ENCODE measurements at regions of chr2 and their contacts with region 1.

Region 1: GRCh38 chr2:147843864-147844696 is 749 bp upstream of the ACVR2A start:
- DNase-seq: peak; percentile 89
- H3K4me3 Mint-ChIP-seq: peak overlapping the region; percentile 88
- H3K27ac Mint-ChIP-seq: peak overlapping the region; percentile 68
- H3K4me1 Mint-ChIP-seq: peaks cover 33% of the 10 kb centered on the region
- H3K27me3 Mint-ChIP-seq: peaks cover 12% of the 10 kb centered on the region

Region 2: DNA sequence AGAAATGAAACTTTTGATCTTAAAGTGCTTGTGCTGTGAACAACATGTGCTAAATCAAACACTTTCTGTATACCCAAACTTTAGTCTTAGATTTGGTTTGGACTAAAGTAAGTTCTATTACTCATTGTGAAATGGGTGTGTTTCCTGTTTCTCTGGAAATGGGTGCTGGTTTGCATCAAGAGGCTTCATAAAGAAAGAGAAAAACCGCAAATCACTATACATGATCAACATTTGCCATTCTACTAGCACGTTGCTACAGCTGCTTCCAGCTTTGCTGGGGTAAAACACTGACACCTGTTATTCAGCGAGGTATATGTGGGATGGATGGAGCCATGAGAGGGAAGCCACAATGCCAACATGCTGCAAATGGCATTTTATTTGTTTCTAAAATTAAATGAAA is 546.3 kb before region 1 on chr2:
- CTCF ChIA-PET with region 1: no interaction called
- intact Hi-C with region 1: loop called (anchors 2 kb)
- DNase-seq: peak; percentile 45
- H3K4me3 Mint-ChIP-seq: no peak overlapping the region
- H3K27ac Mint-ChIP-seq: peak overlapping the region; percentile 86
- H3K4me1 Mint-ChIP-seq: peaks cover 58% of the 10 kb centered on the region
- H3K27me3 Mint-ChIP-seq: no peaks in the 10 kb centered on the region

Region 3: DNA sequence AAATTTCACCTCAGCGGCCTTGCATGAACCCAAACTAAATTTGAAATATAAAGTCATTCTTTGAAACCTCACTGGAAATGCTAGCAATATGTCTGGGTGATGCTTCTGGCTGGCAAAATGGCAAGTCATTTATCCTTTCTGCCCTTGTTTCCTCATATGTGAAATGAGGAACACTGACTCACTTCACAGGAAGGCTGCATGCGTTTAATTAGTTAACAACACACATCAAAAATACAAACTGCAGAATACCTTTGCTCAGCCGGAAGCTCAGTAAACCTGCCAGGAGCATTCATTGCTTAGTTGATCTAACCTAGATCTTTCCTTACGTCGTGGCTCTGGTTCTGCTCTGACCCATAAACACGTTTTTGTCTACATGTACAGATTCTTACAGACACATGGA is 213.5 kb before region 1 on chr2:
- CTCF ChIA-PET with region 1: no interaction called
- intact Hi-C with region 1: loop called (anchors 1 kb)
- DNase-seq: peak; percentile 50
- H3K4me3 Mint-ChIP-seq: no peak overlapping the region
- H3K27ac Mint-ChIP-seq: peak overlapping the region; percentile 80
- H3K4me1 Mint-ChIP-seq: peaks cover 22% of the 10 kb centered on the region
- H3K27me3 Mint-ChIP-seq: no peaks in the 10 kb centered on the region

Region 4: GRCh38 chr2:147829106-147829505 is 15.0 kb before region 1 on chr2:
- CTCF ChIA-PET with region 1: no interaction called
- intact Hi-C with region 1: no loop called
- DNase-seq: no peak
- H3K4me3 Mint-ChIP-seq: no peak overlapping the region
- H3K27ac Mint-ChIP-seq: no peak overlapping the region
- H3K4me1 Mint-ChIP-seq: no peaks in the 10 kb centered on the region
- H3K27me3 Mint-ChIP-seq: no peaks in the 10 kb centered on the region

Region 5: DNA sequence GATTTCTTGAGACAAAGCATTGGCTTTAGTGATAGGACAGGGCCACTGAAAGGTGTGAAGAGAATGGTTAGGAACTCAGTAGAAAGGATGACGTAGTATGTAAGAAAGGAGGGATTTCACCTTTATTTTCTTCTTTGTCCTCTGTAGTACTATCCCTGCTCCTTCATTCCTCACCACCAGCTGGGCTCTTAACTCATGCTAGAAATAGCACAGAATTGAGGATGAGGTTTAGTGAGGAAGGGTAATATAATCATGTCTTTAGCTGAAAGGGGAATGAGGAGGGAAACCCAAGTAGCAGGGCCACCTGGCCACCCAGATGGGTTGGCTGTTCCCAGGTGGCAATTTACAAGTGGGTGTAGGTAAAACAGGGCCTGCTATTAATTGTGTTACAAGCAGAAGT is 15.9 kb after region 1 on chr2:
- CTCF ChIA-PET with region 1: no interaction called
- intact Hi-C with region 1: loop called (anchors 2 kb)
- DNase-seq: no peak
- H3K4me3 Mint-ChIP-seq: no peak overlapping the region
- H3K27ac Mint-ChIP-seq: no peak overlapping the region
- H3K4me1 Mint-ChIP-seq: peaks cover 35% of the 10 kb centered on the region
- H3K27me3 Mint-ChIP-seq: no peaks in the 10 kb centered on the region

Region 6: DNA sequence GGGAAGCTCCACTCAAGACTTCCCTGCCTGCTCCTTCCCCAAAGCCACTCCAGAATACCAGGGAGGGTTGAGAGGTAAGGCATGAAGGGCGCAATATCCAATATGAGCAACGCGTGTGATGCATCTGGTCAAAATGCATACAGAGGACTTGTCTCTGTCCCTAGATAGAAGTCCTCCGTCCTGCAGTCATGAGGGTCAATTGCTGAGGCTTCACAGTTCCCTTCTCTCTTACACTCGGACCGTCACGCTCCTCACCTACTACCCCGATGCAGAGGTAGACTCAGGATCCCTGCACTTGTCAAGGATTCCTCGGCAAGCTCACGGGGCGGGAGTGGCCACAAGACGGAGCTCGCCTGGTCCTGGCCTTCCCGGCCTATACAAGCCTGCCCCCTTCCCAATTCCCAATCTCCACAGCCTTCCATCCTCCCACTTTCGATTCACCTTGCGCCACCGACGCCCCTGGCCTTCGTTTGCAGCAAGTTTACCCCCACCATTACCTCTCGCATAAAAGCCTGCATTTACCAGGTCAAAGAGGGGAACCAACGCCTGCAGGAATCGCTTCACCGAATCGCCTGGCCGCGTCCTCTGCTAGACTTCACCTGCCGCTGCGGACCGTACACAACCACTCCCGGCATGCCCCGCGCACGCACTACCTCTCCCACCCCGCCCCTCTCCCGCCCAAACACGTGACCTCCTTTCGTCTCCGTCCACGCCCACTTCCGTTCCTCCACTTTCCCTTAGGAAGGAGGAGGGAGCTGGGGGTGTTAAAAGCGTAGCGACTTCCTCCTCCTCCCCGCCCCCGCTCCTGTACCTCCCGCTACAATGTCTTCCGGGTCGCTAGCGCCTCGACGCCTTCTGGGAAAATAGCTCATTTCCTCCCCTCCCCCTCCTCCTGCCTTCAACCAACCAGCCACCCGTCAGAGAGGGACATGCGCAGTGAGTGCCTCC is 176.3 kb after region 1 on chr2 and contains the start of gene ORC4:
- CTCF ChIA-PET with region 1: no interaction called
- intact Hi-C with region 1: loop called (anchors 1 kb)
- DNase-seq: peak; percentile 99
- H3K4me3 Mint-ChIP-seq: peak within 1 kb of the TSS; percentile 100
- H3K27ac Mint-ChIP-seq: peak within 1 kb of the TSS; percentile 96
- H3K4me1 Mint-ChIP-seq: peaks cover 44% of the 10 kb centered on the region
- H3K27me3 Mint-ChIP-seq: no peaks in the 10 kb centered on the region
- total RNA-seq, gene ORC4: 35.9 to 38.8 TPM

Region 7: GRCh38 chr2:148874868-148875341 is 1030.8 kb after region 1 on chr2 and contains the start of gene KIF5C:
- CTCF ChIA-PET with region 1: no interaction called
- intact Hi-C with region 1: loop called (anchors 2 kb)
- DNase-seq: peak; percentile 94
- H3K4me3 Mint-ChIP-seq: peak within 1 kb of the TSS; percentile 88
- H3K27ac Mint-ChIP-seq: peak within 1 kb of the TSS; percentile 53
- H3K4me1 Mint-ChIP-seq: peaks cover 13% of the 10 kb centered on the region
- H3K27me3 Mint-ChIP-seq: peaks cover 19% of the 10 kb centered on the region
- total RNA-seq, gene KIF5C: 18.6 to 24.5 TPM